PC-9 (cell line): ENCODE measurements at regions of chr1 and their contacts with region 1.

Region 1: DNA sequence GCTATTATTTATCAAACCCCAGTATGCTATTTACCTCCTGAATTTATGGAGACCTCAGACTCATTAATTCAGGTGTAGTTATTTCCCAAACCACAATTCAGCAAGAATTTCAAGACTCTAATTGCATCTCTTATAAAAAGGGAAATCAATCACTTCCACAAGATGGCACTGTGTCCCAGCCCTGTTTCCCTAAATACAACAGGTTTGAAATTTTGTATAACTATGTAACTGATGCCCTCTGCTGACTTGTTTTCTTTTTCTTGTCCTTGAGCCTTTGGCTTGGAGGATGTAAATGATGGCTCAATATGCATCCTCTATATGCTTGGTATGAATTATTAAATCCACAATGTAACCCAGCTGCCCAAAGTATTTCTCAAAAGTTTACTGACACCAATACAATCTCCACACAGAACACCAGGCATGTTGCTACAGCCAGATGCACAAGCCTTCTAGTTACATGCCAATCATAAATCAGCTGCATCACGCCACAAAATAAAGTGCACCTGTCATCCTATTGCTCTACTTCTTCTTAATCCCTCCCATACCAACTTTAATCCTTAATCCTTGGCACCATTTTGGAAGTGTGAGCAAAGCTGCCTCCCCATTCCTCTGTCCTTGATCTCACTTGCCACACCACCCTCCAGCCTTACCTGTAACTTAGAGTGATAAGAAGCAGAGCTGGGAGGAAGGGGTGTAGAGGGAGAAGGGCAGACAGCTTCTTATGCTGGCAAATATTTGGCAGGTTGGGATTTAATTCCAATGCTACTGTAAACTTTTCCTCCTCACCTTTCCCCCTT is 9.0 kb downstream of the C1orf105 start:
- DNase-seq: peak; percentile 40 to 68
- H3K4me3 ChIP-seq: no peak overlapping the region
- H3K27ac ChIP-seq: no peak overlapping the region
- H3K4me1 ChIP-seq: peaks cover 16% of the 10 kb centered on the region
- H3K27me3 ChIP-seq: no peaks in the 10 kb centered on the region
- CTCF ChIP-seq: peak; percentile 81

Region 2: DNA sequence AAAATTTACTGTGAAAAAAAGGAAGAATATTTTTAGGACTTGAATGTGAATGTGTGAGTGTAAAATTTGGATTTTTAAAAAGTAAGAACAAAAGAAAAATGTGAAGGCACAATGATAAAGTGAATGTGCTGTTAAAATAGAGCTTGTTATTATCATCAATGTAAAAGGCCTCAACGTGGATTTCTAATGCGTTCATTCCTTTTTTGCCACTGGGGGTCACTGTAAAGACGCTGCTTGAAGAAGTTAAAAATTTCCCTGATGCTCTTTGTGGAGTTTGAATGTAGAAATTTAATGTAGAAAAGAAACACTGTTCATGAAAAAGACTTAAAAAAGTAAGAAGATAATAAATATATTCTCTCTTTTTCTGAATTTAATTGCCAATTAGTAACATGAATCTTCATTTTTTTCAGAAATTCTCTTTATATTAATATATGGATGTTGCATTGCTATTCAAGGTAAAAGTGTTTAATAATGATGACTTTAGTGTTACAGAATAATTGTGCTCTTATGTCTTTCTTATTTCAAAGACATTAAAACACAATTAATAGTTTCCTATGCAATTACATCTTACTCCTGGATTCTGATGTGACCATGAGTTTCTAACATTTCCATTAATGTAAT is 426.7 kb before region 1 on chr1:
- CTCF ChIA-PET with region 1: interaction called, 8 read pairs
- POLR2A ChIA-PET with region 1: interaction called, 5 read pairs
- intact Hi-C with region 1: loop called (anchors 1 kb)
- DNase-seq: peak; percentile 23 to 38
- H3K4me3 ChIP-seq: no peak overlapping the region
- H3K27ac ChIP-seq: no peak overlapping the region
- H3K4me1 ChIP-seq: no peaks in the 10 kb centered on the region
- H3K27me3 ChIP-seq: no peaks in the 10 kb centered on the region
- CTCF ChIP-seq: peak; percentile 75

Region 3: GRCh38 chr1:172308577-172308976 is 121.0 kb before region 1 on chr1:
- CTCF ChIA-PET with region 1: no interaction called
- POLR2A ChIA-PET with region 1: interaction called, 21 read pairs
- intact Hi-C with region 1: no loop called
- DNase-seq: no peak
- H3K4me3 ChIP-seq: no peak overlapping the region
- H3K27ac ChIP-seq: no peak overlapping the region
- H3K4me1 ChIP-seq: no peaks in the 10 kb centered on the region
- H3K27me3 ChIP-seq: no peaks in the 10 kb centered on the region
- CTCF ChIP-seq: no peak

Region 4: GRCh38 chr1:172442843-172443565 is 13.5 kb after region 1 on chr1:
- CTCF ChIA-PET with region 1: no interaction called
- POLR2A ChIA-PET with region 1: no interaction called
- intact Hi-C with region 1: no loop called
- DNase-seq: no peak
- H3K4me3 ChIP-seq: peak overlapping the region; percentile 76
- H3K27ac ChIP-seq: no peak overlapping the region
- H3K4me1 ChIP-seq: peaks cover 21% of the 10 kb centered on the region
- H3K27me3 ChIP-seq: no peaks in the 10 kb centered on the region
- CTCF ChIP-seq: no peak

Region 5: DNA sequence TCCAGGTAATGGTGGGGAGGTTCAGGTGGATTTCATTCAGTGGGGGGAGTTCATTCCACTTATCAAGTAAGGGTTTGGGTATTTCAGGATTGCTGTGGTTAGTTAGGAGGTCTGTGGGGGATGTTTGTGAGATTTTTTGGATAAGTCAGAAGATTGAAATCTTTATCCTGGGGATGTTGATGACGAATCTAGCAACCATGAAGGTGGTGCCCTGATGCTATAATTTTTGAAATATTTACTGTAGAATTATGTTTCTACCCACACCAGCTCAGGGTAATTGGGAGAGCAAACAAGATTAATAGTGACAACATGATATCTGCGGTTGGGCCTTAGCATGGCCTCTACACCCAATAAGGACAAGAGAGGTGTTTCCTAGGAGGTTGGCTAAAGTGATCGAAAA is 131.7 kb after region 1 on chr1:
- CTCF ChIA-PET with region 1: no interaction called
- POLR2A ChIA-PET with region 1: no interaction called
- intact Hi-C with region 1: no loop called
- DNase-seq: no peak
- H3K4me3 ChIP-seq: no peak overlapping the region
- H3K27ac ChIP-seq: no peak overlapping the region
- H3K4me1 ChIP-seq: no peaks in the 10 kb centered on the region
- H3K27me3 ChIP-seq: no peaks in the 10 kb centered on the region
- CTCF ChIP-seq: no peak